GM12878 (cell line): ENCODE measurements at regions of chr5 and their contacts with region 1.

Region 1: DNA sequence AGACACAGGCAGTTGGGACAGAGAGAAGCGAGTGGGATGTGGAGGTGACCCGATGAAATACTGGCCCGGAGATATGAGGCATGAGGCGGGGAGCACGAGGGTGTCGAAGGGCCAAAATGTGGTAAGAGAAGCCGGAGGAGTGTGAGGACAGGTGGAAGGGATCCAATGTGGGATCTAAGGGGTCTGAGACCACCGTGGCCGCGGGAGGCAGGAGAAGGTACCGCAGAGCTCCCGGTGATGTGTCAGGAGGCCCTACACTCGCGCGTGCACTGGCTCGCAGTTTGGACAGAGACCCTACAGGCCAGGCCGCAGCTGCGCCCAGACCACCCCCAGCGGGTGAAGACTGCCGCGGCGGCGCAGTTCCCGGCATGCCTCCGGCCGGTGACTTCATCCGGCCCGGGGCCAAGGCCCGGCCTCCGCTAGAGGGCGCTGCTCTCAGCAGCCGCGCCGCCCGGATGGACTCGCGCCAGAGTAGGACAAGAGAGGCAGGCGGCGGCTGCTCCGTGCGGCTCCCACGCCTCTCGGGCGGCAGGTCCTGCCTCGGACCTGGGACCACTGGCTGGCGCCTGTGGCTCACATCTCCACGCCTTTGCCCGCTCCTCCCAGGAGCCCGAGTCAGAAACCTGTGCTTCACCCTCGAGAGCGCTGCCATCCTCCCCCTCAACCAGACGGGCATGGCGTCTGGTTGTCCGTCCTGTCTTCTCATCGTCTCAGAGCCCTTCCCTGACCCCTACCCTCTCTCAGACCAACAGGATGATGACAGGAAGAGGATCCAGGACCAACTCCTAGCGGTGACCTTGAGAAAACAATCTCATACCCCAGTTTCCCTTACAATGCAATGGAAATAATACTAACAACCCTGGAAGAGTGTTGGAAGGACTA is 35.4 kb upstream of the STING1 start:
- DNase-seq: no peak
- ATAC-seq: peak; percentile 92
- H3K4me3 ChIP-seq: peak overlapping the region; percentile 66
- H3K27ac ChIP-seq: peak overlapping the region; percentile 69
- H3K4me1 ChIP-seq: peaks cover 19% of the 10 kb centered on the region
- H3K27me3 ChIP-seq: no peaks in the 10 kb centered on the region
- CTCF ChIP-seq: peak; percentile 96 to 99 (median 97); a peak in 5 of 6 replicates
- EP300 ChIP-seq: no peak
- POLR2A ChIP-seq: peak; percentile 96
- RAD21 ChIP-seq: peak; percentile 74

Region 2: DNA sequence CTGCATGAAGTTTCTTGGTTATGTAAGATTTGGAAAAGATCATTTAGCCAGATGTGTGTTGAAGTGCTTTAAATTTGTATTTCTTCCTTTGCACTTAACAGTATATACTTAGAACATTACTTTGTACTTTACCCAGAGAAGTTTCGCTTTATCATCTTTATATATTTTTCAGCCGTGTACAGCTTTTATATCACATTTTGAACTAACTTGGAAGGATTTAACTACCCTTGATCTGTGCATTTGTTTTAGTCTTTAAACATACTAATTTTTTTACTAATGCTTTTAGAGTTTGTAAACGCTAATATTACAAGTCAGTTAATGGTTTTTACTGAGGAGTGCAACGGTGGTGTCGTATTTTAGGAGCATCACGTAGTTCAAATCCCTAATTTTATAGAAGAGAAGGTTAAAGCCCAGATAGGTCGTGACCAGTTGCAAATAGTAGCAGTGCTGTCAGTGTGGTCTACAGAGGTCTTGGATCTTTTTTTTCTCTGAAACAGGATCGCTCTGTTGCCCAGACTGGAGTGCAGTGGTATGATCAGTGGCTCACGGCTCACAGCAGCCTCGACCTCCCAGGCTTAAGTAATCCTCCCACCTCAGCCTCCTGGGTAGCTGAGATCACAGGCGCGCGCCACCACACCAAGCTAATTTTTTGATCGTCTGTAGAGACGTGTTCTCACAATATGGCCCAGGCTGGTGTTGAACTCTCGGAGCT is 222.4 kb before region 1 on chr5:
- CTCF ChIA-PET with region 1: no interaction called
- POLR2A ChIA-PET with region 1: no interaction called
- RAD21 ChIA-PET with region 1: no interaction called
- SMC1A ChIA-PET with region 1: no interaction called
- in situ Hi-C with region 1: no loop called
- intact Hi-C with region 1: no loop called
- DNase-seq: no peak
- ATAC-seq: peak; percentile 2; the same call in 2 of the 3 replicates
- H3K4me3 ChIP-seq: peak overlapping the region; percentile 89
- H3K27ac ChIP-seq: peak overlapping the region; percentile 98
- H3K4me1 ChIP-seq: peaks cover 16% of the 10 kb centered on the region
- H3K27me3 ChIP-seq: no peaks in the 10 kb centered on the region
- CTCF ChIP-seq: no peak
- EP300 ChIP-seq: no peak
- POLR2A ChIP-seq: no peak
- RAD21 ChIP-seq: no peak

Region 3: DNA sequence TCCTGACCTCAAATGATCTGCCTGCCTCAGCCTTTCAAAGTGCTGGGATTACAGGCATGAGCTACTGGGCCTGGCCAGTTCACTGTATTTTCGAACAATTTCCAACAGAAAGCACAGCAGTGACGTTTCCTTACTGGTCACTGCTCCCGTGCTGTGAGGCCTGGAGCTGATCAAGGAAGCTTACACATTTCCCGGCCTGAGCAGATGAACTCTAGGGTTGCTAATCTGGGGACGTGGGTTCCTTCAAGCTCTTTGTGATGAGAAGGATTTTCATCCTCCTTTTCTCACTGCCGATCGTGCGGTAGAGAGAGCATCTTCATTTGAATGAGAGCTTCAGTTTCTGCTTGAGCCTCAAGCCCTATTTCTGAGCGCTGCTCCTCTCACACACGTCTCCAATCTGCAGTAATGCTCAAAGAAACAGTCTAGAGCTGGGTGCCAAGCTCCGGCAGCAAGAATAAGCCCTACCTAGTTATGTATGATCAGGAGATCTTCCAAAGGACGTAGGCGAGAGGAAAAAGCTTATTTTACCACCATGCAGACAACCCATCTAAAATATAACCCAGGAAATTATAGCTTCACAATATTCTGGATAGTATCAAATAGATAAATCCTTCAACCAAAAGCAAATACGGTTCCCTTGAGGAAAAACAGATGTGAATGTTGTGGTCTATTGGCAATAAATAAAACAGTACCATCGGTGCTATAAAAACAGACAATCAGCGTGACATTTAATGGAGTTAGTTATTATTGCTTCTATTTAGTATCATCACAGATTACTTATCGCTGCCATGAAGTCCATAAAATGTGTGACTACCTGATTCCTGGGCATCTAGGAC is 106.7 kb before region 1 on chr5:
- CTCF ChIA-PET with region 1: interaction called, 24 read pairs
- POLR2A ChIA-PET with region 1: interaction called, 3 read pairs
- RAD21 ChIA-PET with region 1: interaction called, 19 read pairs
- SMC1A ChIA-PET with region 1: interaction called, 7 read pairs
- in situ Hi-C with region 1: no loop called
- intact Hi-C with region 1: no loop called
- DNase-seq: no peak
- ATAC-seq: no peak
- H3K4me3 ChIP-seq: no peak overlapping the region
- H3K27ac ChIP-seq: no peak overlapping the region
- H3K4me1 ChIP-seq: peaks cover 30% of the 10 kb centered on the region
- H3K27me3 ChIP-seq: no peaks in the 10 kb centered on the region
- CTCF ChIP-seq: no peak
- EP300 ChIP-seq: no peak
- POLR2A ChIP-seq: no peak
- RAD21 ChIP-seq: no peak

Region 4: DNA sequence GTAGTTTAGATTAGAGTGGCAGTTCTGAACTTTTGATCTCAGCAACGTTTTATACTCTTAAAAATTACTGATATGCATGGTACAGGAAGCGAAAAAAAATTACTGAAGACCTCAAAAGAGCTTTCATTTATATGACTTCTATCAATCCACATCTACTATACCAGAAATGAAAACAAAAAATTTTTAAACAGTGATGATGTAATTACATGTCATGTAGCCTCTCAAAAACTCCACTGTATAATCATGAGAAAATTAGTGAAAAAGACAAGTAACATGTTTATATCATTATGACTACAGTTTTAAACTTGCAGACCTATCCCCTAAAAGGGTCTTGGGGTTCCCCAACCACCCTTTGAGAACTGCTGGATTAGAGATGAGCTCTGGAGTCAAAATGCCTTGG is 87.9 kb before region 1 on chr5:
- CTCF ChIA-PET with region 1: interaction called, 491 read pairs
- POLR2A ChIA-PET with region 1: interaction called, 12 read pairs
- RAD21 ChIA-PET with region 1: interaction called, 241 read pairs
- SMC1A ChIA-PET with region 1: interaction called, 235 read pairs
- in situ Hi-C with region 1: no loop called
- intact Hi-C with region 1: no loop called
- DNase-seq: no peak
- ATAC-seq: no peak
- H3K4me3 ChIP-seq: no peak overlapping the region
- H3K27ac ChIP-seq: no peak overlapping the region
- H3K4me1 ChIP-seq: no peaks in the 10 kb centered on the region
- H3K27me3 ChIP-seq: no peaks in the 10 kb centered on the region
- CTCF ChIP-seq: no peak
- EP300 ChIP-seq: no peak
- POLR2A ChIP-seq: no peak
- RAD21 ChIP-seq: no peak

Region 5: GRCh38 chr5:139458580-139459406 is 59.1 kb before region 1 on chr5:
- CTCF ChIA-PET with region 1: interaction called, 33 read pairs
- POLR2A ChIA-PET with region 1: interaction called, 9 read pairs
- RAD21 ChIA-PET with region 1: interaction called, 10 read pairs
- SMC1A ChIA-PET with region 1: interaction called, 32 read pairs
- in situ Hi-C with region 1: no loop called
- intact Hi-C with region 1: loop called (anchors 2 kb)
- DNase-seq: peak; percentile 60
- ATAC-seq: peak; percentile 70
- H3K4me3 ChIP-seq: no peak overlapping the region
- H3K27ac ChIP-seq: peak overlapping the region; percentile 93
- H3K4me1 ChIP-seq: peaks cover 45% of the 10 kb centered on the region
- H3K27me3 ChIP-seq: no peaks in the 10 kb centered on the region
- CTCF ChIP-seq: no peak
- EP300 ChIP-seq: no peak
- POLR2A ChIP-seq: no peak
- RAD21 ChIP-seq: no peak

Region 6: GRCh38 chr5:139492700-139493192 is 25.2 kb before region 1 on chr5:
- CTCF ChIA-PET with region 1: interaction called, 25 read pairs
- POLR2A ChIA-PET with region 1: interaction called, 3 read pairs
- RAD21 ChIA-PET with region 1: interaction called, 8 read pairs
- SMC1A ChIA-PET with region 1: interaction called, 4 read pairs
- in situ Hi-C with region 1: no loop called
- intact Hi-C with region 1: no loop called
- DNase-seq: no peak
- ATAC-seq: no peak
- H3K4me3 ChIP-seq: no peak overlapping the region
- H3K27ac ChIP-seq: no peak overlapping the region
- H3K4me1 ChIP-seq: peaks cover 7% of the 10 kb centered on the region
- H3K27me3 ChIP-seq: no peaks in the 10 kb centered on the region
- CTCF ChIP-seq: no peak
- EP300 ChIP-seq: no peak
- POLR2A ChIP-seq: no peak
- RAD21 ChIP-seq: no peak

Region 7: DNA sequence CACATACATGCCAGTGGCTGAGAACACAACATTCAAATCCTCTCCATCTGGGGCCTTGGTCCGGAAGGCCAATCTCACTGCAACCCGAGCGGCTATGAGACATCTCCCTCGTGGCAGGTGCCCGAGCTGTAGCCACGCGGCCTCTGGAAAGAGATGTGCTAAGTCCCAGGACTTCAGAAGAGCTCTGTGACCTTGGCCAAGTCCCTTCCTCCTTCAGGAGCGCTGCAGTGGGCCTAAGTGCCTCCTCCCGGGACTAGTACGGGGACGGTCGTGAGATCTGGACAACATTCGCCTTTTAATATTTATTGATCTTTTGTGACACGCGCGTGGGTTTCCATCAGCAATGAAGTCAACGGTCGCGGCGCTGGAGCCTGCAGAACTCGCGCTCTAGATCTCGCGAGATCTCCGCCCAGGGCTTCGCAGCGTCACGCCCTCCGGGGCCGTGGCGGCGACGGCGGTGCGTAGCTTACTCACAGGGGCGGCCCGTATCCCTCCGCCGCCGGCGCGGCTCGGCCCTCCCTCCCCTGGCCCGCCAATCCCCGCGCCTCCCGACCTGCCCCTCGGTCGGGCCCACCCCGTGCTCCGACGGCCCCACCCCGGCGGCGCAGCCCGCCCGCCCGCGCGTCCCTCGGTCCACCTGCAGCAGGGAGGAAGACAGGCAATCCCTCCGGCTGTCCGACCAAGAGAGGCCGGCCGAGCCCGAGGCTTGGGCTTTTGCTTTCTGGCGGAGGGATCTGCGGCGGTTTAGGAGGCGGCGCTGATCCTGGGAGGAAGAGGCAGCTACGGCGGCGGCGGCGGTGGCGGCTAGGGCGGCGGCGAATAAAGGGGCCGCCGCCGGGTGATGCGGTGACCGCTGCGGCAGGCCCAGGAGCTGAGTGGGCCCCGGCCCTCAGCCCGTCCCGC is 43.1 kb after region 1 on chr5 and contains the start of gene UBE2D2:
- CTCF ChIA-PET with region 1: interaction called, 13 read pairs
- POLR2A ChIA-PET with region 1: interaction called, 22 read pairs
- RAD21 ChIA-PET with region 1: interaction called, 39 read pairs
- SMC1A ChIA-PET with region 1: interaction called, 13 read pairs
- in situ Hi-C with region 1: no loop called
- intact Hi-C with region 1: loop called (anchors 2 kb)
- DNase-seq: peak; percentile 92
- ATAC-seq: peak; percentile 87
- H3K4me3 ChIP-seq: peak within 1 kb of the TSS; percentile 75
- H3K27ac ChIP-seq: peak within 1 kb of the TSS; percentile 69
- H3K4me1 ChIP-seq: peaks cover 20% of the 10 kb centered on the region
- H3K27me3 ChIP-seq: no peaks in the 10 kb centered on the region
- CTCF ChIP-seq: no peak
- EP300 ChIP-seq: no peak
- POLR2A ChIP-seq: peak; percentile 87
- RAD21 ChIP-seq: no peak
- polyA plus RNA-seq, gene UBE2D2: 58.6 to 120 TPM